ENCODE measurements at regions of chr22 and their contacts with region 1.

Region 1: DNA sequence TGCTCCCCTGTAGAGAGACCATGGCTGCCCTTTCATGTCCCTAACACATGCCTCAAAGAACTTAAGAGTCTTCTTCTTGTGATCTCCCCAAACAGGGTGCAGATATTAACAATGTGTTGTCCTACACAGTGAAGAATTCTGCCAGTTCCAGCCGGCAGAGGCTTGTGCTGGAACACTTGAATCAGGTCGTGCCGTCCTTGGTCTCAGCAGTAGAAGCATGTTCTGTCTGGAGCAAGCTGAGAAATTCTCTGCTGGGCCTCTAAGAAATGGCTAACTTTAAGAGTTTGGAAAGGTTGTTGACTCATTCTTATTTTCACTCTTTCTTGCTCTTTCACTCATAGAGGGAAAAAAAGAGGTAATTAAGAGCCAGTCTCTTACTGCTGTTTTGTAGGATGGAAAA is 71.1 kb upstream of the SLC25A18 start:
- DNase-seq: peak; percentile 51
- H3K4me3 ChIP-seq: no peak overlapping the region
- H3K27ac ChIP-seq: peak overlapping the region in 1 of 2 donors; percentile 41
- H3K4me1 ChIP-seq: peaks cover 10% of the 10 kb centered on the region
- H3K27me3 ChIP-seq: no peaks in the 10 kb centered on the region
- CTCF ChIP-seq: no peak
- POLR2A ChIP-seq: no peak

Region 2: GRCh38 chr22:16917144-16918003 is 574.9 kb before region 1 on chr22:
- intact Hi-C with region 1: no loop called
- DNase-seq: peak; percentile 79
- H3K4me3 ChIP-seq: no peak overlapping the region
- H3K27ac ChIP-seq: no peak overlapping the region
- H3K4me1 ChIP-seq: no peaks in the 10 kb centered on the region
- H3K27me3 ChIP-seq: no peaks in the 10 kb centered on the region
- CTCF ChIP-seq: peak in 2 of 3 experiments; percentile 38 to 64
- POLR2A ChIP-seq: no peak

Region 3: DNA sequence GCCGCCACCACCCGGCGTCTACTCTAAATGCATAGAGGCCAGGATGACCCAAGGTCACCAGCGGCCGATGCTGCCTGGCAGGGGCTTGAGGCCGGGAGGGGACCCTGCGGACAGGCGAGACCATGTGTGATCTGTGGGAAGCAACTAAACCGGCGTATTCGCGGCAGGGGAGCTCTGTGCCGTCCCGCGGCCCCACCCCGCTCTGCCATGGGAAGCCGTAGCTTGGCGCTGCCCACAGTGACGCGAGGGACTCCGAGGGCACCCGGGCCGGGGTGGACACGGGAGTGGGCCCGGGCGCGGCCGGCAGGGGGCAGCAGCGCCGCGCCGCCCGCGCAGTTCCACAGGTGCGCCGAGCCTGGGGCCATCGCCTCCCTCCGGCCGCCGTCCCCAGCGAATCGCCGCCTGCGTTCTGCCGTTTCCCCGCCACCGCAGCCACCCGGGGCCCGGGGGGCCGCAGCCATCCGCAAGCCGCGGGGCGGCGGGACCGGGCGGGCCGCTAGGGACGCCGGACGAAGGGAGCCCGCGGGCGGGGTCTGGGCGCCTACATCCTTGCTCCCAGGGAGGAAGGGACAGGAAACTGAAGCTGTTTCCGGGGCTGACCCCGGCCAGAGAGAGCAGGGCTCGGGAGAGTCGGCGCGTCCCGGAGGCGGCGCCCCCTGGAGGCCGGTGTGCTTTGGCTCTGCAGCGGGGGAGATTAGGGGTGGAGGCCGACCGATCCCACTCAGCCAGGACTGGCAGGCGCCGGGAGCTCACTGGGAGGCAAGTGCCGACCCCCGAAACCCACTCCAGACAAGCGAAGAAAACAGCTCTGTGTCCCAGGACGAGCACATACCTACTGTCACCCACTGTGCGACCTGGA is 320.7 kb before region 1 on chr22:
- intact Hi-C with region 1: loop called (anchors 10 kb)
- DNase-seq: peak; percentile 91
- H3K4me3 ChIP-seq: peak overlapping the region; percentile 61 to 78
- H3K27ac ChIP-seq: peak overlapping the region; percentile 65 to 75
- H3K4me1 ChIP-seq: peaks cover 9% of the 10 kb centered on the region
- H3K27me3 ChIP-seq: no peaks in the 10 kb centered on the region
- CTCF ChIP-seq: peak; percentile 85 to 95 (median 89)
- POLR2A ChIP-seq: no peak

Measured in testis (tissue), 5 donors.